H1 (cell line): ENCODE measurements at regions of chr22 and their contacts with region 1.

Region 1: GRCh38 chr22:40396882-40397281 is 26.5 kb downstream of the SGSM3 start:
- DNase-seq: peak in 1 of 2 experiments; percentile 53
- H3K4me3 ChIP-seq: no peak overlapping the region
- H3K27ac ChIP-seq: no peak overlapping the region
- H3K4me1 ChIP-seq: peaks cover 0 to 2% (median under 1%) of the 10 kb centered on the region in 4 experiments; a peak in 3 of 7 replicates
- H3K27me3 ChIP-seq: no peaks in the 10 kb centered on the region
- CTCF ChIP-seq: no peak
- EP300 ChIP-seq: 0 out of 3 replicates have a peak, but pooled peaks of 1 of the 2 experiments have one; percentile 7
- POLR2A ChIP-seq: no peak
- RAD21 ChIP-seq: no peak

Region 2: GRCh38 chr22:40332319-40332781 is 64.5 kb before region 1 on chr22:
- CTCF ChIA-PET with region 1: no interaction called
- POLR2A ChIA-PET with region 1: no interaction called
- DNase-seq: no peak
- H3K4me3 ChIP-seq: no peak overlapping the region
- H3K27ac ChIP-seq: no peak overlapping the region; the same call in 1 of the 2 replicates
- H3K4me1 ChIP-seq: peaks cover 2 to 19% (median 14%) of the 10 kb centered on the region in 4 experiments; a peak in 6 of 7 replicates
- H3K27me3 ChIP-seq: no peaks in the 10 kb centered on the region
- CTCF ChIP-seq: no peak
- EP300 ChIP-seq: no peak
- POLR2A ChIP-seq: no peak
- RAD21 ChIP-seq: no peak

Region 3: DNA sequence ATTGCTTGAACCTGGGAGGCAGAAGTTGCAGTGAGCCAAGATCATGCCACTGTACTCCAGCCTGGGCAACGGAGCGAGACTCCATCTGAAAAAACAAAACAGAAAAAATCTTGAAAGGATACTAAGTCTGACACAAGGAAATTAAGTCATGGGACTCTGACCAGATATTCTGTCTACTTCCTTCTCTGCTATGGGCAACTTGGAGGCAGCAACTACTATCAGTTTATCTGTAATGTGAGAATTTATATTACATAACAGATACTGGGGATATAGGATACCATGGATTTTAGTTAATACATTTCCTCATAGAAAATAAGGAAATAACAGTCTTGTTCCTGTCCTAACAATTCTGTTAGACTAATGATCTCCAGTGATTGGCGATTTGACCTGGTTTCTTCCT is 28.0 kb before region 1 on chr22:
- CTCF ChIA-PET with region 1: no interaction called
- POLR2A ChIA-PET with region 1: interaction called, 11 read pairs
- DNase-seq: no peak
- H3K4me3 ChIP-seq: no peak overlapping the region
- H3K27ac ChIP-seq: no peak overlapping the region
- H3K4me1 ChIP-seq: peaks cover 0 to 3% (median 0%) of the 10 kb centered on the region in 4 experiments; a peak in 1 of 7 replicates
- H3K27me3 ChIP-seq: no peaks in the 10 kb centered on the region
- CTCF ChIP-seq: no peak
- EP300 ChIP-seq: no peak
- POLR2A ChIP-seq: no peak
- RAD21 ChIP-seq: no peak

Region 4: DNA sequence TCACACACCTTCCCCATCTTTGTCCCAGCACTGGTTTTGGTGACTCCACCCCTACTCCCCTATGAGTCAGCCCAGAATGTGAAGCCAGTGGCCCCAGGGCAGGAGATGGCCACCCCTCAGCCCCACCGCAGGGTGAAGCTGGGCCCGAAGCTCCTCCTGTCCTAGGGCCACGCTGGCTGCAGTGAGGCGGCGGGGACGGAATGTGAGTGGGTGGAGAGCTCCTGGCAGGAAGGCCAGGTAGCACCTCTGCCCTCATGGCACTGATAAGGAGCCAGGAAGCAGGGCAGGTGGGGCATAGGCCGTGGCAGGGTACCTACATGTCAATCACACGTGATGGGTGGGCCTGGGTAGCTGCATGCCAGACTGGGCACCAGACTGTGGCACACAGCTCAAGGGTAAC is 13.4 kb after region 1 on chr22:
- CTCF ChIA-PET with region 1: interaction called, 10 read pairs
- POLR2A ChIA-PET with region 1: interaction called, 6 read pairs
- DNase-seq: no peak
- H3K4me3 ChIP-seq: no peak overlapping the region
- H3K27ac ChIP-seq: no peak overlapping the region
- H3K4me1 ChIP-seq: no peaks in the 10 kb centered on the region
- H3K27me3 ChIP-seq: no peaks in the 10 kb centered on the region
- CTCF ChIP-seq: no peak
- EP300 ChIP-seq: no peak
- POLR2A ChIP-seq: no peak
- RAD21 ChIP-seq: no peak

Region 5: DNA sequence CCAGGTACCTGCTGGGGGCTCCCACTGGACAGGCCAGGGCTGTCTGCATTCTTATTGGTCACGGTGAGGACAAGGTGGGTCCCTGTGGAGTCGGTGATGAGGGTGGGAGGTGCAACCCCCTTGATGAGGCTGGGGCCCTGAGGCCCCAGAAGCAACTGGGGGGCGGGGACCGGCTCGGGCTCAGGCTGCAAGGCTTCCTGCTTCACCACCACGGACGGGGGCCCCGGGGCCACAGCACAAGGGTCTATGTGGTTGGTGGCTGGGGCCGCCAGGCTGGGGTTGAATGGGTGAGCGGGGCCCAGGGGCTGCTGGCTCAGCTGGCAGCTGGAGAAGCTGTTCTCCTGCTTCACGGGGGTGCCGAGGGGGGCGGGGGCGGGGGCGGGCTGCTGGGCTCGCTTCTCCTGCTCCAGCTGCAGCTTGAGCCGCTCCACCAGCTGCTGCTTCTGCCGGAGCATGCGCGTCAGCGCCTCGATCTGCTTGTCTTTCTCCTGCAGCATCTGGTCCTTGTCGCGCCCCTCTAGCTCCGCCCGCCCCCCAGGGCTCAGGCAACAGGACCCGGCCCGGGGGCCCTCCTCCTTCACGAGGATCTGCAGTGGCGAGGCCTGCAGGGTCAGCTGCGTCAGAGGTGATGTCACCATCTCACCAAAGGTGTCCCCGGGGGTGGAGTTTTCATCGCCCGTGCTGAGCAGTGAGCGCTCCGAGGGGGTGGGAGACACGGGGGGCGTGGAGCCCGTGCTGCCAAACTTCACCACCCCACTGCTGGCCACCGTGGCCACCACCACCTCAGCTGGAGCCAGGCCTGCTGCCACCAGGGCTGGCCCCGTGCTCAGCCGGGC is 21.7 kb after region 1 on chr22:
- CTCF ChIA-PET with region 1: interaction called, 10 read pairs
- POLR2A ChIA-PET with region 1: interaction called, 6 read pairs
- DNase-seq: peak in 1 of 2 experiments; percentile 42
- H3K4me3 ChIP-seq: no peak overlapping the region
- H3K27ac ChIP-seq: no peak overlapping the region
- H3K4me1 ChIP-seq: no peaks in the 10 kb centered on the region; a peak in 1 of 7 replicates
- H3K27me3 ChIP-seq: no peaks in the 10 kb centered on the region
- CTCF ChIP-seq: no peak
- EP300 ChIP-seq: no peak
- POLR2A ChIP-seq: no peak
- RAD21 ChIP-seq: no peak

Region 6: DNA sequence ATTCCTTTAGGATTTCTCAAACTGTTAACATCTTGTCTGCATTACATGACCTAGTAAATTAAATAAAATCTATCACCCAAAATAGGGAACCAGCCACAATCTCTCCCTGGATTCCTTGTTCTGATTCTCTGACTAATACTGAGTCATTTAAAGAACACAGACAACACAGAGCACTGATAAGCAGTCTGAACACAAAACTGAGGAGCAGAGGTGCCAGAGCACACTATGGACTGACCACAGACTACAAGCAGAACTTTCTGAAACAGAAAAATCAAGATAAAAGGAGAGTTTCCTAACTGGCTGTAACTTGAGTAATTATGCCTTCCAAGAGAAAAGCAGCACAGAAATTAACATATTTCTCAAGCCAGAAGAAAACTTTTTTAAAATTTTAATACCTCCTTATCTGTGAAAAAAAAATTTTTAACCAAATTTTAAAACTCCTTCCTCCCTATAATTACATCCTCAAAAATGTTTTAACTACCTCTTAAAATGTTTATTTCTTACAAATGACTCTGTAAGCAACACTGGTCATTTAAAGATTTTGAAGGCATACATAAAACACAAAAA is 102.4 kb after region 1 on chr22:
- CTCF ChIA-PET with region 1: no interaction called
- POLR2A ChIA-PET with region 1: no interaction called
- DNase-seq: peak in 1 of 2 experiments; percentile 10
- H3K4me3 ChIP-seq: no peak overlapping the region
- H3K27ac ChIP-seq: no peak overlapping the region
- H3K4me1 ChIP-seq: peaks cover 0 to 4% (median 2%) of the 10 kb centered on the region in 4 experiments; a peak in 4 of 7 replicates
- H3K27me3 ChIP-seq: no peaks in the 10 kb centered on the region
- CTCF ChIP-seq: no peak
- EP300 ChIP-seq: no peak
- POLR2A ChIP-seq: no peak
- RAD21 ChIP-seq: no peak